ENCODE measurements at regions of chr19 and their contacts with region 1.

Region 1: GRCh38 chr19:38634757-38635482 is 12.5 kb upstream of the ACTN4 start:
- DNase-seq: peak; percentile 94
- H3K4me3 Mint-ChIP-seq: peak overlapping the region; percentile 55
- H3K27ac Mint-ChIP-seq: peak overlapping the region; percentile 71
- H3K4me1 Mint-ChIP-seq: peaks cover 26% of the 10 kb centered on the region
- H3K27me3 Mint-ChIP-seq: no peaks in the 10 kb centered on the region

Region 2: DNA sequence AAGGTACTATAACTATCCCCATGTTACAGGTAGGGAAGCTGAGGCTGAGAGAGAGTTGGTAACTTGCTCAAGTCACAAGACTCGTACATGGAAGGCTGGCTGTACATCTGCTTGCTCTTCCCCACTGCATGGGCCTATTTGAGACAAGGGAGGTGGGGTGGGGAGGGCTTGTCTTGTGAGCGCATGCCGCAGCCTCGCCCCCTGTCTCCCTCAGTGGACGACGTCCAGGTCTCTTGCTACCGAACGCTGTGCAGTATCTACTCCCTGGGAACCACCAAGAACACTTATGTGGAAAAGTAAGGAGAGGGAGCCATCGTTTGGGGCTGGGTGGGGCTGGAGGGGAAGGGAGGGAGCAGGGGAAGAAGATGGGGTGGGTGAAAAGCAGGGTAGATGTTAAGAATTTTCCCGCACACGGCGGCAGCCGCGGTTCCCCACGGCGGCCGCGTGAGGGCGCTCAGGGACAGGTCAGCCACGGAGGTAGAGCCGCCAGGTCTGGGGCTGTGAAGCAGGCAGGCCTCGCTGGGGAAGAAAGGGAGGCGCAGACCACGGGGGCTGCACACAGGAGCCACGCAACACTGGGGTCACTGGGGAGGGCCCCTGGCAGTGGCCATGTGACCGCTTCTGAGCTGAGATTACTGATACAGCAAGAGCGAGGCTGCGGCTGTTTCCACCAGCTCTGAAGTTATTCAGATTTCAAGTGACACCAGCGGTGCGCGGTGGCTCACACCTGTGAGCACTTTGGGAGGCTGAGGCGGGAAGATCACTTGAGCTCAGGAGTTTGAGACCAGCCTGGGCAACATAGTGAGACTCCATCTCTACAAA is 119.9 kb before region 1 on chr19:
- intact Hi-C with region 1: loop called (anchors 2 kb)
- DNase-seq: peak; percentile 94
- H3K4me3 Mint-ChIP-seq: peak overlapping the region; percentile 26
- H3K27ac Mint-ChIP-seq: no peak overlapping the region
- H3K4me1 Mint-ChIP-seq: peaks cover 22% of the 10 kb centered on the region
- H3K27me3 Mint-ChIP-seq: peaks cover 7% of the 10 kb centered on the region

Measured in activated CD4-positive, alpha-beta T cell treated with anti-CD3 and anti-CD28 coated beads, Interleukin-2, amount 10 ng/mL, durations not matched to agents 24 days and 14 days (primary cell).